ENCODE measurements at regions of chr3 and their contacts with region 1.

Region 1: DNA sequence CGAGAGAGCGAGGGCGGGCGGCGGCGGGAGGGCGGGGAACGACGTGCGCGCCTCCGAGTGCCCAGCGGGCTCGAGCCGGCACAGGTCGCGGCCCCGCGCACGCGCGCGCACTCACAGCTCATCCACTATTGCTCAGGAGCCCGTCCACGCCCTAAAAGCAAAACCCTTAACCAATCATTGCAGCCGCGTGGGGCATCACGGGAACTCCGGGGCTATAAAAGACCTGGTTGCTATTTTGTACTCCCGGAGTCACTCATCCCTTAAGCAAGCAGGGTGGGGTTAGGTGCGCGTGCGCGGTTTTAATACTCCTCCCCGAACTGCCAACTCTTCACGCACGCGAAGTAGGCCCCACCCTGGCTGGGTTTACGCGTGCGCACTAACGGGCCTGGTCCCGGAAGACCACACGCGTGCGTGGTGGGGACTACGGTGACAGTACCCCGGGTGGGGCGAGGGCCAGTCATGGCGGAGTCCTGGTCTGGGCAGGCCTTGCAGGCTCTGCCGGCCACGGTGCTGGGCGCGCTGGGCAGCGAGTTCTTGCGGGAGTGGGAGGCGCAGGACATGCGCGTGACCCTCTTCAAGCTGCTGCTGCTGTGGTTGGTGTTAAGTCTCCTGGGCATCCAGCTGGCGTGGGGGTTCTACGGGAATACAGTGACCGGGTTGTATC is at the starts of genes RHOA and TCTA:
- DNase-seq: peak; percentile 100
- ATAC-seq: peak; percentile 93
- total RNA-seq, gene RHOA: 255 TPM
- total RNA-seq, gene TCTA: 13.4 TPM

Region 2: DNA sequence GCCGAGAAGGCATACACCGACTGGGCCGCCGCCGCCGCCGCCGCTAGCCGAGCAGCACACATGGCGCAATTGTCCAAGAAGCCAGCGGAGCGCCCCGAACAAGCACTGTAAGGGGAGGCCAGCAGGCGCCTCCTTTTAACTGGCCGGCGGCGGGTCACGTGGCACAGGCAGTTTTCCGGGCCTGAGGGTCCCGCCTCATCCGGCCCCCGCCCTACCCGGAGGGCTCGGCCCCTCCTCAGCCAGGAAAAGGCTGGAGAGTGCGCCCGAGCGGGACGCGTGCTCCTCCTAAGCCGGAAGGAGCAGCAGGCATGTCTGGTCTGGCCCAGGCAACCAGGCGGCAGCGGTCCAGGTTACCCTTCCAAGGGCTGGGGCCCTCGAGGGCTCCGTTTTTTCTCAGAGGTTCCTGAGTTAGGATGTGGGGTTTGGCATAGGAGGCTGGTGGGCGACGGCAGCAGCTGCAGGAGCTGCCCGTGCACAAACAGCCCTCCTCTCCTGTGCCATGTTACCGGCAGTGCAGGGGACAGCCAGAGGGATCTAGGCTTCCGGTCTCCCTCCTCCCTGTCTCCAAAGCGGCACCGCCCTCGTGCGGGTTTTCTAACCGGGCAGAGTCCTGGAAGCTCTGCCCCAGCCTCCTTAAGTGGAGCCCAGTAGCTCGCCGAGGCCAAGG is 53.8 kb before region 1 on chr3 and contains the start of gene GPX1:
- intact Hi-C with region 1: loop called (anchors 5 kb)
- DNase-seq: peak; percentile 98
- ATAC-seq: peak; percentile 97
- total RNA-seq, gene GPX1: 117 TPM

Measured in Right ventricle myocardium superior (tissue), 1 donor.